Mammary epithelial cell (primary cell): ENCODE measurements at regions of chr6 and their contacts with region 1.

Region 1: DNA sequence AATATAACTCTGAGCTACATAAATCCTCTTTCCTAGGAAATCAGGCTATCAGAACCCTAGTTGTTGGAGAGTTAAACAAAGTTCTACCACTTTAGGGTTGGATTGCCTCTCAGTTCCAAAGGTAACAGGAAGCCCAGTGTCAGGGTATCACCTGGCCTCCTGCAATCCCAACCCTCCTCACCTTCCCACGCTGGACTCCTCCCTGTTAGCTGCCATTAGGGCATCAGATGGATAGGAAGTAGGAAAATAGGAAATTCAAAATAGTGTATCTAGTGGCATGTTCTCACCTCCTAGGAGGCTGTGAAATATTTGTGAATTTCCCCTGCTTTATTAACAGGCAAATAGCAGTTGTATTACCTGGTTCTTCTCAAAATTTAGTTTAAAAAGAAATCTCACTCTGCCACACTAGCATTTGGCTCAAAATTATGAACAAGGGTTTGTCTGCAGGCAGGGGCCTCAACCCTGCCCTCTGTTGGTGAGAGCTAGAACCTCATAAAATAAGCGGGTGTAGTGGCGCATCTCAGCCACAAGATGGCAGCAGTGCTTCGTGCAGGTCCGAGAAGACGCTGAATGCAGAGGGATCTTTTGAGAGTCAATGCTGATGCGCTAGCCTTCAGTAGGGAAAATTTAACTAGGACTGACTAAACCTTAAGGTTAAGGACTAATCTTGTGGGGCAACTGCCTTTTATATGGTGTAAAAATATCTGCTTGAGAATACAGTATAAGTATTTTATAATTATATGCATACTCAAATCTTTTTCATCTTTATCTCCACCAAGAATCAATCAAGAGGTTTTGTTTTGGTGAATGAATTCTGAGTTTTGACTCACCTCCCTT is 209.8 kb upstream of the KCNQ5 start:
- DNase-seq: peak; percentile 60
- H3K4me3 ChIP-seq: no peak overlapping the region
- H3K27ac ChIP-seq: no peak overlapping the region
- H3K4me1 ChIP-seq: no peaks in the 10 kb centered on the region
- H3K27me3 ChIP-seq: no peaks in the 10 kb centered on the region
- CTCF ChIP-seq: peak; percentile 100

Region 2: GRCh38 chr6:72246926-72247325 is 165.2 kb before region 1 on chr6:
- CTCF ChIA-PET with region 1: no interaction called
- dilution Hi-C with region 1: no loop called
- in situ Hi-C with region 1: no loop called
- intact Hi-C with region 1: loop called (anchors 1 kb)
- DNase-seq: peak; percentile 1
- H3K4me3 ChIP-seq: no peak overlapping the region
- H3K27ac ChIP-seq: no peak overlapping the region
- H3K4me1 ChIP-seq: no peaks in the 10 kb centered on the region
- H3K27me3 ChIP-seq: no peaks in the 10 kb centered on the region
- CTCF ChIP-seq: peak in 1 of 2 donors; percentile 12

Region 3: DNA sequence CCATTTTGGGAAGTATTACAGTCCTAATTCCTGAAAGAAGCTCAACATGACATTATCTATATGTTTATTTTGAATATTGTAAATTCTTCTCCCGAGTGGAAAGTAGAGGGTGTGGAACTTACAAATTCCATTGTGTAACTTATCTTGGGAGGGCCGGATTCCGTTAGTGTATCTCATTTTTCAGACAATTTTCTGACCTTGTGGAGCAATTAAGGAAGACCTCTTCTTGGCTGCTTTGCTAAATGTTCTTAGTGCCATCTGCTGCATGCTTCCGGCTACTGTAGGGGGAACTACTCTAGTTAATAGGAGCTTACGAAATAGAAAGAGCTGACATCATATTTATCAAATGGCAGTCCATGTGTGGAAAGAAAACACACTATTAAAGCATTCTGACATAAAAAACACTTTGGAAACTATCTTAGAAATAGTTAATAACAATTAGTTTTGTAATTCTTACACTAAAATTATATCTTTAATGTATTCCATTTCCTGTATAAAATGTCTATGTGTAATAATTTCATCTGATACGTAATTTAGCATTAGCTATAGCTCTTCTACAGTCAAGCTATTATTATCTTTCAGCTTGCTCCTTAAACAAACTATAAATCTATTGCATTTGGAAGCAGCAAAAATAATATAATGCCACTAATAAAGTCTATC is 168.3 kb after region 1 on chr6:
- CTCF ChIA-PET with region 1: interaction called, 9 read pairs
- dilution Hi-C with region 1: no loop called
- in situ Hi-C with region 1: loop called (anchors 5 kb)
- intact Hi-C with region 1: loop called (anchors 1 kb)
- DNase-seq: peak; percentile 67
- H3K4me3 ChIP-seq: no peak overlapping the region
- H3K27ac ChIP-seq: no peak overlapping the region
- H3K4me1 ChIP-seq: no peaks in the 10 kb centered on the region
- H3K27me3 ChIP-seq: no peaks in the 10 kb centered on the region
- CTCF ChIP-seq: peak; percentile 87 to 88

Region 4: GRCh38 chr6:73129653-73130443 is 717.8 kb after region 1 on chr6:
- CTCF ChIA-PET with region 1: no interaction called
- dilution Hi-C with region 1: no loop called
- in situ Hi-C with region 1: no loop called
- intact Hi-C with region 1: loop called (anchors 1 kb)
- DNase-seq: peak; percentile 83
- H3K4me3 ChIP-seq: no peak overlapping the region
- H3K27ac ChIP-seq: no peak overlapping the region
- H3K4me1 ChIP-seq: peaks cover 18% of the 10 kb centered on the region
- H3K27me3 ChIP-seq: no peaks in the 10 kb centered on the region
- CTCF ChIP-seq: peak; percentile 100

Region 5: DNA sequence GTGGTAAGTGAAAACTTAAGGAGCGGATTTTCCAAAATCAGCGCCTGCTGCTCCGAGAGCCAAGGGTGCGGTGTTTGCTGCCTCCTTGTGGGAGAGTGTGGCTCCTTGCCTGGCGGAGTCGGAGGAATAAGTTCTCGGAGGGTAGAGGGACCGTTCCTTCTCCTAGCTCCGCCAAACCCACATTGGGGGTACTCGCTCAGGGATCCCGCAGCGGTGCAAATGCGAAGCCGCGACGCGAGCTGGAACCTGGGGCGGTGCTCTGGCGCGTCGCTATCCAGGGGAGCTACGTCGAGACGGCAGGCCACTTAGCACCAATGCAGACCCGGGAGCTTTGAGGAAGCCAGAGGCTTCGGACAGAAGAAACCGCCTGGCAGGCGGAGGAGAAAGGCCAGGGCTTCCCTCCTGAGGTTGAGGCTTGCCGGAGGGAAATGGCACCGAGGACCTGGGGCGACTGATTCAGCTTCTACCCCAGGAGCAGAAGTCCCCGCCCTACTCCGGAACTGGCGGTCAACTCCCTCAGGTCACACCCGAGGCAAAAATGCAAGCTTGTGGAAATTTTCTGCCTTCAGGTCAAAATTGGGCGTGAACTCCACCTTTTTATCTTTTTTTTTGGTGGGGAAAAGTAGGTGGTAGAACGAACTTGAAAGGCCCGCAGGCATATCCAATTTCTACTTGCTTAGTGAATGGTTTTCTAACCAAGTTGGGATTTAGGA is 976.9 kb after region 1 on chr6:
- CTCF ChIA-PET with region 1: no interaction called
- dilution Hi-C with region 1: no loop called
- in situ Hi-C with region 1: no loop called
- intact Hi-C with region 1: loop called (anchors 2 kb)
- DNase-seq: peak; percentile 63
- H3K4me3 ChIP-seq: peak overlapping the region; percentile 32 to 58 (median 47)
- H3K27ac ChIP-seq: no peak overlapping the region
- H3K4me1 ChIP-seq: peaks cover 2% of the 10 kb centered on the region
- H3K27me3 ChIP-seq: no peaks in the 10 kb centered on the region
- CTCF ChIP-seq: peak; percentile 54 to 81